Colonic mucosa (tissue), 4 donors: ENCODE measurements at regions of chr16 and their contacts with region 1.

Region 1: DNA sequence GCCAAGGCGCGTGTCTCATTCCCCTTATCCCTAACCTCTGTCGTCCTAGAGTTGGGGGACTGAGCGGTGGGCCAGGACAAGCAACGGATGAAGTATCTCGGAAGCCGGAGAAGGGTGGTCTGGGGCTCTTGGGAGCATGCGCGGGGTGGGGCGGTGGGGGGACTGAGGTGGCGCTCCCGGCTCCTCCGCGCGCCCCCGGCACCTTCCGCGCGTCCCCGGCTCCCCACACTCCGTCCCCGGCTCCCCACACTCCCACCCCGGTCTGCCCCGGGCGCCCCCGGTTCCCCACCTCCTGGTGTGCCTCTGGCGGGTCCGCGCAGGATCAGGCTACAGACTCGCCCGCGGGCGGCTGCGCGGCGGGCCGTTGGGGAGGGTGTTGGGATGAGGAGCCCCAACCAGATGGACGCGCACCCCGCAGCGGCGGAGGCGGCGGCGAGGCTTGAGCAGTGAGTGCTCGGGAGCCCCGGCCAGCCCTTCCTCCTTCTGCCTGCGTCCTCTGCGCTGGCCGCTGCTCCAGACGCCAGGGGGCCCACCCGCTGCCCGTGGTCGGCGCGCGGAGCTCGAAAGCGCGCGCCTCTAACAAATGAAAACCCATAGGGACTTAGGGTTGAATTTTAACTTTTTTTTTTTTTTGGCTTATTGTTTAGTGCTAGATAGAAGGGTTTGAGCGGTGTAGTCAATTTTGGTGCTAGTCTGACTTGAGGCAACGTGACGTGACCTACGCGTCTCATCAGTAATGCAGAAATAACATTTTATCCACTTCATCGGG is 5.6 kb upstream of the CRYM start:
- DNase-seq: peak; percentile 66
- H3K4me3 ChIP-seq: peak overlapping the region; percentile 36
- H3K27ac ChIP-seq: no peak overlapping the region
- H3K4me1 ChIP-seq: peaks cover 4% of the 10 kb centered on the region
- H3K27me3 ChIP-seq: peaks cover 16% of the 10 kb centered on the region
- CTCF ChIP-seq: peak; percentile 38

Region 2: GRCh38 chr16:20956319-20956718 is 327.4 kb before region 1 on chr16:
- intact Hi-C with region 1: no loop called
- DNase-seq: no peak
- H3K4me3 ChIP-seq: no peak overlapping the region
- H3K27ac ChIP-seq: no peak overlapping the region
- H3K4me1 ChIP-seq: no peaks in the 10 kb centered on the region
- H3K27me3 ChIP-seq: no peaks in the 10 kb centered on the region
- CTCF ChIP-seq: no peak

Region 3: GRCh38 chr16:21116148-21116693 is 167.5 kb before region 1 on chr16:
- intact Hi-C with region 1: no loop called
- DNase-seq: no peak
- H3K4me3 ChIP-seq: no peak overlapping the region
- H3K27ac ChIP-seq: no peak overlapping the region
- H3K4me1 ChIP-seq: no peaks in the 10 kb centered on the region
- H3K27me3 ChIP-seq: no peaks in the 10 kb centered on the region
- CTCF ChIP-seq: no peak

Region 4: DNA sequence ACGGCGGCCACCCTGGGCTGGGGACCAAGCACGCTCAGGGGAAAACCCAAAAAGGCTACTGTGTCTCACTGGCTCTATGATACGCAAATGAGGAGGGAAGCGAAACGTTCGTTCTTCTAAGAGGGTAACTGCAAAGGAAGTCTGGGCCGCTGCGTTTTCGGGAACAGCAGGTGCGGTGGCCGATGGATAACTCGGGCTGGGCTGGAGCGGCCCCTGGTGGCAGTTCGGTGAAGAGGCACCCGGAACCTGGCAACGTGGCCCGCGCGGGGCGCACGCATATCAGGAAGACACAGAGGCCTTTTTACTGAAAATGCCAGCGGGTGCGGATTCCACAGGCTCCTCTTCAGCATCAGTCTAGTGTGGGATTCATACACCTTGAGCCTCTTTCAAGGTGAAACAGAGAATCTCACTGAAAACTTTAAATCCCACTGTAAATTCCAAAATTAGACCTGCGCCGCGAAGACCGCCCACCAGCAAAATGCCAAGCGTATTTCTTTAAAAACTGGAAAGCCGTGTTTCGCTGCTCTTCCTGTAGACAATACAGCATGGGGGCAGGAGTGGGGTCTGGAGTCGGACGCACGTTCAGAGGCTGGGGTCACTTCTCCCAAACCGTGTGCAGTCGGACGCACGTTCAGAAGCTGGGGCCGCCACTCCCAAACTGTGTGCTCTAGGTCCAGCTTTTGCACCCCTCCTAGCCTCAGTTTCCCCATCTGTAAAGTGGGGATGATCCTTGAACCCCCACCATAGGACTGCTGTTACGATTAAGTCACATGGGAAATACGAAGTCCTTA is 271.3 kb after region 1 on chr16:
- intact Hi-C with region 1: loop called (anchors 10 kb)
- DNase-seq: peak; percentile 86
- H3K4me3 ChIP-seq: no peak overlapping the region
- H3K27ac ChIP-seq: no peak overlapping the region
- H3K4me1 ChIP-seq: peaks cover 3% of the 10 kb centered on the region
- H3K27me3 ChIP-seq: no peaks in the 10 kb centered on the region
- CTCF ChIP-seq: peak; percentile 89